ENCODE measurements at regions of chr17 and their contacts with region 1.

Region 1: DNA sequence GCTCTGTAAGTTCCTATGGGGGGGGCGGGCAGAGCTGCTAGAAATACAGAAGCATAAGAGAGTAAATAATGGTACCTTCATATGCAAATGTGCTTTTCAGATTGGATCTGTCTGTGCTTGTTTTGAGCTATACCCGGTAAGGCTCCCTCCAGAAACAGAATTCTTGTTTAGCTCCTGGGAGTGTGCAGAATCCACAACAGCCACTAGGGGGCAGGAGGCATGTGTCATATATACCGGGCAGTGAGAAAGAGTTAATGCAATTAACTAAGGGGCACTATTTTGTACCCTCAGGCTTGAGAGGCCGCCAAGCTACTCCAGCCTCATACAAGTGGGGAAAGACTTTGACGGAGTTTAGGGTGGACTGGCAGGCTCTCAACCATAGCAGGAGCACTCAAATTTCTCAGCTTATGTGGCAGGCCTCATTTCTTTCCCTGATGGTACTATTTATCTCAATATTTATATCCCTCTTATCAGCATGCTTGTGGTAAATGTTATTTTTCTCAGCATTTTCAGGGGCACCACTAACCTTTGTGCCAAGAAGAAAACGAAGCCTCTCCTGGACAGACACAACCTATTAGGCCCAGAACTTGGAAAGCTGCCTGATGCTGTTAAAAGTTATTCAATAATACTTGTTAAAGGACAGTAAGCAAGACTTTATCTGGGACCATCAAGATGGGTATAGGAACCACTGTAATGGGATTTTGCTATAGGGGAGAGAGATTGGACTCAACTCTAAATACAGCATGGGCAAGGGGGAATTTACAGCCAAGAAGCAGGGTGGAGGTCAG is 10.7 kb upstream of the CENPV start:
- DNase-seq: peak; percentile 43 to 82 (median 75)
- ATAC-seq: peak; percentile 97
- H3K4me3 ChIP-seq: no peak overlapping the region
- H3K4me3 Mint-ChIP-seq: no peak overlapping the region
- H3K27ac ChIP-seq: no peak overlapping the region
- H3K27ac Mint-ChIP-seq: no peak overlapping the region
- H3K4me1 ChIP-seq: no peaks in the 10 kb centered on the region
- H3K4me1 Mint-ChIP-seq: peaks cover 3% of the 10 kb centered on the region
- H3K27me3 ChIP-seq: no peaks in the 10 kb centered on the region
- H3K27me3 Mint-ChIP-seq: no peaks in the 10 kb centered on the region
- CTCF ChIP-seq: peak; percentile 91

Region 2: DNA sequence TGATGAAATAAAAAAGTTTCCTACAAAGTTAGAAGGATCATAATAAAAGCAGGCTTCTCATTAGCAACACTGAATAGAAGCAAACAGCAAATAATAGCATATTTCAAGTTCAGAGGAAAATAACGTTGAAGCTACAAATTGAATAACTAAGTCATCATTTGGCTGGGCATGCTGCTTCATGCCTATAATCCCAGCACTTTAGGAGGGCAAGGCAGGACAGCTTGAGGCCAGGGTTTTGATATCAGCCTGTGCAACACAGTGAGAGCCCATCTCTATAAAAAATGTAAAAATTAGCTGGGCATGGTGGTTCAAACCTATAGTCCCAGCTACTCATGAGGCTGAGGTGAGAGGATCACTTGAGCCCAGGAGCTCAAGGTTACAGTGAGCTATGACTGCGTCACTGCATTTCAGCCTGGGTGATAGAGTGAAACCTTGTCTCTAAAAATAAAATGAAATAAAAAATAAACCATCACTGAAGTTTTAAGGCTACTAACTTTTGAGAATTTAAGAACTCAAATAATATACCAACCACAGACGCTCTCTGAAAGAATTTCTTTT is 174.1 kb before region 1 on chr17:
- CTCF ChIA-PET with region 1: no interaction called
- POLR2A ChIA-PET with region 1: no interaction called
- intact Hi-C with region 1: no loop called
- DNase-seq: no peak
- ATAC-seq: no peak
- H3K4me3 ChIP-seq: no peak overlapping the region
- H3K4me3 Mint-ChIP-seq: no peak overlapping the region
- H3K27ac ChIP-seq: no peak overlapping the region
- H3K27ac Mint-ChIP-seq: no peak overlapping the region
- H3K4me1 ChIP-seq: no peaks in the 10 kb centered on the region
- H3K4me1 Mint-ChIP-seq: peaks cover 36% of the 10 kb centered on the region
- H3K27me3 ChIP-seq: no peaks in the 10 kb centered on the region
- H3K27me3 Mint-ChIP-seq: no peaks in the 10 kb centered on the region
- CTCF ChIP-seq: no peak

Region 3: DNA sequence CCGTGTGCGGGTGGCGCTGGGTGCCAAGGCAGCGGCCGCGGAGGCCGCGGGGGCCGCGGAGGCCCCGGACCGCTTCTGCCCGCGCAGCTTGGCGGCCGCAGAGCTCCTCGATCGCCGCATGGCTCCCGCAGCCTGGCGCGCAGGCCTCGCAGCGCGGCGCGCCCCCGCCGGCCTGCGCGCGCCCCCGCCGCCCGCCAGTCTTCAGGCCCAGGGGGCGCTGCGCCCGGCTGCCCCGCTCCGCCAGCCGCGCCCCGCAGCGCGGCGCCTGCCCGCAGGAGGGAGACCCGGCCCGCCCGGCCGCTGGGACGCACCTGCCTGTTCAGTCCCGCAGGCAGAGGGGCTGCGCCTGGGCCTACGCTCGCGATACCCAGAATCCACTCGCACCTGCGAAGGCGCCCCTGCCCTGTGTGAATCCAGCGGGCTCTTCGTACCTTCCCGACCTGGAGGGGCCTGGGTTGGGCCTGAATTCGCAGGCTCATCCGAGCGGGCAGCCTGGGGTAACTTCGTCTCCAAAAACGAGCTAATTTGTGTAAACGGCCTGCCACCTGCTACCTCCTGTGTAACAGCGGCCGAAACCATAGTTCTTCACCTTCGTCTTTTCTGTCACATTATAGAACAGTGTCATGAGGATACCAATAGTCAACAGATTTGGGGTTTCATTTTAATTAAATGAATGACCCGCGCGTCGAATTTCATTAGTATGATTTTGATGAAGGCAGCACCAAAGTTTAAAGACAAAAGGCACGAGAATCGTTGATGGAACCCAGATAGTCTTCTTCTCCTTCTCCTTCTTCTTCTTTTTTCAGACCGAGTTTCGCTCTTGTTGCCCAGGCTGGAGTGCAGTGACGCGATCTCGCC is 10.4 kb before region 1 on chr17 and contains the start of gene CENPV:
- CTCF ChIA-PET with region 1: interaction called, 61 read pairs
- POLR2A ChIA-PET with region 1: interaction called, 11 read pairs
- intact Hi-C with region 1: no loop called
- DNase-seq: peak; percentile 28 to 86 (median 70)
- ATAC-seq: peak; percentile 85
- H3K4me3 ChIP-seq: peak within 1 kb of the TSS; percentile 63 to 79
- H3K4me3 Mint-ChIP-seq: peak within 1 kb of the TSS; percentile 92
- H3K27ac ChIP-seq: peak within 1 kb of the TSS; percentile 47 to 57
- H3K27ac Mint-ChIP-seq: peak within 1 kb of the TSS; percentile 85
- H3K4me1 ChIP-seq: peaks cover 16% of the 10 kb centered on the region
- H3K4me1 Mint-ChIP-seq: peaks cover 28% of the 10 kb centered on the region
- H3K27me3 ChIP-seq: no peaks in the 10 kb centered on the region
- H3K27me3 Mint-ChIP-seq: no peaks in the 10 kb centered on the region
- CTCF ChIP-seq: no peak
- total RNA-seq, gene CENPV: 28.8 to 31.8 TPM

Region 4: DNA sequence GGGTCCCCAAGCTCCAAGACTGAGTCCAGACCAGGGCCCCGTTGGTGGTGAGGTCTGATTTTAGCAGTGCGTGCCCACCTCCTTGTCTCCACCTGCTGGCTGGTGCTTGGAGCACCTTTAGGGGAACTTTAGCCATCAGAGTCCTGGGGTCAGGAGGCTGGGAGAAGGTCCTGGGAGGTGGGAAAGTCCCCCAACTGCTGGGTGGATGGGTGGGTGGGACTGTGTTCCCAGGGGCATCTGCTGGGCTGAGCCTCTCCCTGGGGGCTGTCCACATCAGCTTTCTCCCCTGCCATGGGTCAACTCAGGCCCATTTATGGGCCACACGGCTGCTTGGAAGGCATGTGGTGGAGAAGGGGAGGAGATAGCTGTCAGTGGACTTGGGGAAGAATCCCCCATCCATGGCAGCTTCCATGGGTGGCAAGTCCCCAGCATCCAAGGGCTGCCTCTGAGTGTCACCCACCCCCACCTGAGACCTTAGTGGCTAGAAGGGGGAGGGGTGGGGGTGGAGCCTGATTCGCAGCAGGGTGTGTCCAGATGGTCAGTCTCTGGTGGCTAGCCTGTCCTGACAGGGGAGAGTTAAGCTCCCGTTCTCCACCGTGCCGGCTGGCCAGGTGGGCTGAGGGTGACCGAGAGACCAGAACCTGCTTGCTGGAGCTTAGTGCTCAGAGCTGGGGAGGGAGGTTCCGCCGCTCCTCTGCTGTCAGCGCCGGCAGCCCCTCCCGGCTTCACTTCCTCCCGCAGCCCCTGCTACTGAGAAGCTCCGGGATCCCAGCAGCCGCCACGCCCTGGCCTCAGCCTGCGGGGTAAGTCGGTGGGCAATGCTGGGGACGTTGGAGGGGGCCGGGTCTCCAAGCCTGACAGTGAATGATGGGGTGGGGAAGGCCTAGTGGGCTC is 51.3 kb after region 1 on chr17 and contains the start of gene TRPV2:
- CTCF ChIA-PET with region 1: interaction called, 60 read pairs
- POLR2A ChIA-PET with region 1: no interaction called
- intact Hi-C with region 1: loop called (anchors 1 kb)
- DNase-seq: peak; percentile 23 to 78 (median 64)
- ATAC-seq: peak; percentile 47
- H3K4me3 ChIP-seq: peak within 1 kb of the TSS; percentile 95
- H3K4me3 Mint-ChIP-seq: peak within 1 kb of the TSS; percentile 95
- H3K27ac ChIP-seq: peak within 1 kb of the TSS; percentile 85 to 97
- H3K27ac Mint-ChIP-seq: peak within 1 kb of the TSS; percentile 99
- H3K4me1 ChIP-seq: peaks cover 48% of the 10 kb centered on the region
- H3K4me1 Mint-ChIP-seq: peaks cover 52% of the 10 kb centered on the region
- H3K27me3 ChIP-seq: no peaks in the 10 kb centered on the region
- H3K27me3 Mint-ChIP-seq: no peaks in the 10 kb centered on the region
- CTCF ChIP-seq: peak; percentile 52
- total RNA-seq, gene TRPV2: 37.1 to 37.4 TPM

Region 5: GRCh38 chr17:16453493-16453851 is 89.5 kb after region 1 on chr17:
- CTCF ChIA-PET with region 1: interaction called, 18 read pairs
- POLR2A ChIA-PET with region 1: no interaction called
- intact Hi-C with region 1: no loop called
- DNase-seq: no peak
- ATAC-seq: no peak
- H3K4me3 ChIP-seq: no peak overlapping the region
- H3K4me3 Mint-ChIP-seq: no peak overlapping the region
- H3K27ac ChIP-seq: no peak overlapping the region
- H3K27ac Mint-ChIP-seq: peak overlapping the region; percentile 55
- H3K4me1 ChIP-seq: no peaks in the 10 kb centered on the region
- H3K4me1 Mint-ChIP-seq: peaks cover 11% of the 10 kb centered on the region
- H3K27me3 ChIP-seq: no peaks in the 10 kb centered on the region
- H3K27me3 Mint-ChIP-seq: no peaks in the 10 kb centered on the region
- CTCF ChIP-seq: no peak

Region 6: GRCh38 chr17:16529906-16530305 is 166.0 kb after region 1 on chr17:
- CTCF ChIA-PET with region 1: interaction called, 10 read pairs
- POLR2A ChIA-PET with region 1: no interaction called
- intact Hi-C with region 1: no loop called
- DNase-seq: no peak
- ATAC-seq: no peak
- H3K4me3 ChIP-seq: no peak overlapping the region
- H3K4me3 Mint-ChIP-seq: no peak overlapping the region
- H3K27ac ChIP-seq: no peak overlapping the region
- H3K27ac Mint-ChIP-seq: no peak overlapping the region
- H3K4me1 ChIP-seq: no peaks in the 10 kb centered on the region
- H3K4me1 Mint-ChIP-seq: peaks cover 2% of the 10 kb centered on the region
- H3K27me3 ChIP-seq: peaks cover 0 to 4% of the 10 kb centered on the region in 2 experiments
- H3K27me3 Mint-ChIP-seq: peaks cover 35% of the 10 kb centered on the region
- CTCF ChIP-seq: no peak

Measured in CD8-positive, alpha-beta T cell (primary cell).